Activated CD4-positive, alpha-beta T cell treated with anti-CD3 and anti-CD28 coated beads for 36 hours (primary cell): ENCODE measurements at regions of chr15 and their contacts with region 1.

Region 1: GRCh38 chr15:73936181-73936580 is 9.9 kb downstream of the LOXL1 start:
- DNase-seq: no peak
- ATAC-seq: no peak
- H3K4me3 Mint-ChIP-seq: no peak overlapping the region
- H3K27ac Mint-ChIP-seq: no peak overlapping the region
- H3K4me1 Mint-ChIP-seq: peaks cover 2% of the 10 kb centered on the region
- H3K27me3 Mint-ChIP-seq: no peaks in the 10 kb centered on the region

Region 2: GRCh38 chr15:73950831-73951561 is 14.8 kb after region 1 on chr15:
- CTCF ChIA-PET with region 1: interaction called, 12 read pairs
- POLR2A ChIA-PET with region 1: interaction called, 3 read pairs
- intact Hi-C with region 1: no loop called
- DNase-seq: peak; percentile 85
- ATAC-seq: peak; percentile 95
- H3K4me3 Mint-ChIP-seq: no peak overlapping the region
- H3K27ac Mint-ChIP-seq: no peak overlapping the region
- H3K4me1 Mint-ChIP-seq: peaks cover 4% of the 10 kb centered on the region
- H3K27me3 Mint-ChIP-seq: no peaks in the 10 kb centered on the region